ENCODE measurements at regions of chr2 and their contacts with region 1.

Region 1: GRCh38 chr2:1742681-1743395 is 1.5 kb downstream of the PXDN start:
- DNase-seq: peak; percentile 90
- ATAC-seq: peak; percentile 84

Region 2: GRCh38 chr2:1653956-1654695 is 88.7 kb before region 1 on chr2:
- intact Hi-C with region 1: loop called (anchors 10 kb)
- DNase-seq: peak; percentile 34
- ATAC-seq: no peak